ENCODE measurements at regions of chr5 and their contacts with region 1.

Region 1: GRCh38 chr5:33969572-33970452 is 14.7 kb downstream of the SLC45A2 start:
- DNase-seq: peak; percentile 74
- ATAC-seq: peak; percentile 99
- H3K4me3 ChIP-seq: no peak overlapping the region
- H3K27ac ChIP-seq: no peak overlapping the region
- H3K4me1 ChIP-seq: peaks cover 4% of the 10 kb centered on the region; the same call in 1 of the 2 replicates
- H3K27me3 ChIP-seq: no peaks in the 10 kb centered on the region
- CTCF ChIP-seq: peak; percentile 95

Region 2: GRCh38 chr5:33440482-33441240 is 529.2 kb before region 1 on chr5 and contains the start of gene TARS1:
- CTCF ChIA-PET with region 1: interaction called, 17 read pairs
- POLR2A ChIA-PET with region 1: no interaction called
- intact Hi-C with region 1: loop called (anchors 1 kb)
- DNase-seq: peak; percentile 100
- ATAC-seq: peak; percentile 94
- H3K4me3 ChIP-seq: peak within 1 kb of the TSS; percentile 92
- H3K27ac ChIP-seq: peak within 1 kb of the TSS; percentile 83
- H3K4me1 ChIP-seq: peaks cover 24% of the 10 kb centered on the region
- H3K27me3 ChIP-seq: no peaks in the 10 kb centered on the region
- CTCF ChIP-seq: no peak
- total RNA-seq, gene TARS1: 184 and 221 TPM in 2 replicates

Region 3: DNA sequence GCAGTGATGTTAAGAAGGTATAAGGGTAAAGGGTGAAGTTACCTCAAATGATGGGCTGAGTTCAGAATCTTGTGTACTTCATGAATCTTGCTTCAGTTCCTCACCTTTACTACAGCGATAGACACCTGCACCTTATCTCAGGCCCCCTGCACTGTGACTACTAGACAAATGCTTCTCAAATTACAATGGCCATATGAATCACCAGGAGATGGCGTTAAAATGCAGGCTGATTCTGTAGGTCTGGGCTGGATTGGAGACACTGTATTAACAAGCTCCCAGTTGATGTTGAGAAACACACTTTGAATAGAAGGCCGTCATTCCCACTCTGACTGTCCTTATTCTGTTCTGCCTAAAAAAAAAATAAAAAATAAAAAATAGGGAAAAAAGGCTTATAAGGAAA is 499.3 kb before region 1 on chr5:
- CTCF ChIA-PET with region 1: interaction called, 6 read pairs
- POLR2A ChIA-PET with region 1: no interaction called
- intact Hi-C with region 1: loop called (anchors 1 kb)
- DNase-seq: peak; percentile 75
- ATAC-seq: peak; percentile 88
- H3K4me3 ChIP-seq: no peak overlapping the region
- H3K27ac ChIP-seq: no peak overlapping the region
- H3K4me1 ChIP-seq: no peaks in the 10 kb centered on the region
- H3K27me3 ChIP-seq: no peaks in the 10 kb centered on the region
- CTCF ChIP-seq: peak; percentile 73

Measured in PC-3 (cell line).